PC-3 (cell line): ENCODE measurements at regions of chr19 and their contacts with region 1.

Region 1: GRCh38 chr19:56080669-56081401 is 40.3 kb downstream of the ZNF787 start:
- DNase-seq: peak; percentile 59
- ATAC-seq: peak; percentile 53
- H3K4me3 ChIP-seq: peak overlapping the region; percentile 53
- H3K27ac ChIP-seq: no peak overlapping the region
- H3K4me1 ChIP-seq: no peaks in the 10 kb centered on the region; the same call in 1 of the 2 replicates
- H3K27me3 ChIP-seq: no peaks in the 10 kb centered on the region
- CTCF ChIP-seq: peak; percentile 63

Region 2: DNA sequence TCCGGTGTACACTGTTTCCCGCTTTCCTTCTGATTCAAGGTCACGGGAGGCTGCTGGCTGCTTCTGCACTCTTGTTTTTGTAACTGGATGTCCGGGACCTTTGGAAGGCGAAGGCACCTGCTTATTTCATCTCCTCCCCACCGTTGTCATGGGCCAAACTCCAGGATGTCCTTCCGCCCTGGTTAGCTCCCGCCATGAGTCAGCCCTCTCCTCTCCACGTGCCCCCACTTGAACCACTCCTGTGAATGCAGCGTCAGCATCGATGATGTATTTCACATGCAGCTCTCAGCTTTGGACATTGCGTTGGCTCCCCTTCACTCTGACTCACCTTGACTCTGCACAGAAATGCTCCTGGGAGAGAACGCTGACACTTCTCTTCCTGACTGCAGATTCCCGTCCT is 89.4 kb after region 1 on chr19:
- CTCF ChIA-PET with region 1: interaction called, 9 read pairs
- POLR2A ChIA-PET with region 1: interaction called, 3 read pairs
- intact Hi-C with region 1: loop called (anchors 1 kb)
- DNase-seq: peak; percentile 94
- ATAC-seq: peak; percentile 87
- H3K4me3 ChIP-seq: no peak overlapping the region
- H3K27ac ChIP-seq: peak overlapping the region; percentile 36
- H3K4me1 ChIP-seq: peaks cover 9% of the 10 kb centered on the region
- H3K27me3 ChIP-seq: peaks cover 8% of the 10 kb centered on the region
- CTCF ChIP-seq: no peak

Region 3: DNA sequence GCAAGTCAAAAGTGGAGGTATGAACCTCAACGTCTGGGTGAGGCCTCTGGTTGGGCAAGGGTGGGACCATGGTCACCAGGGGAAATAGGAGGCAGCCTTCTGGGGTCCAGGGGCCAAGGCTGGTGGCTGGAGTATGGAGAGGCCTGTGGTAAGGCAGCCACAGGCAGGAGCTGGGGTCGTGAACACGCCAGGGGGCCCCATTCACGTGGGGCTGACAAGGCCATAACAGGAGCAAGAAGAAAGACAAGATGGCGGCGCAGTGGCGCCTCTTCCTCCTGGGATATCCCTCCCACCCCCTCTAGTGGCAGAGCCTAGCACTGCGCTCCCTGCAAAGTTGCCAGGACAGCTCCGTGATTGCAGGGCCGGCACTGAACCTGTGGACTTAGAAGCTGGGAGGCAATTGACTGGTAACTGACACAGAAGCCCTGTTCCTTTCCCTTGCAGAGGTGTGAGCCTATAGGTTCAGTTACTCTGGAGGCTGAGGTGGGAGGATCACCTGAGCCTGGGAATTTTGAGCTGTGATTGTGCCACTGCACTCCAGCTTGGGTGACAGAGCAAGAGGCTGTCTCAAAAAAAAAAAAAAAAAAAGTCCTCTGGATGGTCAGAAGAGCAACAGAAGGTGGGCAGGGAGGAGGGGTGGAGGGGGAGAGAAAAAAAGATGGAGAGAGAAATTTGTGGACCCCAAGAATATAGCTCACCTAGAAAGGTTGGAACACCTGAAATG is 172.0 kb after region 1 on chr19:
- CTCF ChIA-PET with region 1: interaction called, 3 read pairs
- POLR2A ChIA-PET with region 1: no interaction called
- intact Hi-C with region 1: loop called (anchors 2 kb)
- DNase-seq: peak; percentile 73
- ATAC-seq: peak; percentile 67
- H3K4me3 ChIP-seq: no peak overlapping the region
- H3K27ac ChIP-seq: no peak overlapping the region
- H3K4me1 ChIP-seq: no peaks in the 10 kb centered on the region
- H3K27me3 ChIP-seq: no peaks in the 10 kb centered on the region
- CTCF ChIP-seq: peak; percentile 90

Region 4: GRCh38 chr19:56333505-56333904 is 252.7 kb after region 1 on chr19:
- CTCF ChIA-PET with region 1: interaction called, 14 read pairs
- POLR2A ChIA-PET with region 1: no interaction called
- intact Hi-C with region 1: loop called (anchors 1 kb)
- DNase-seq: peak; percentile 87
- ATAC-seq: peak; percentile 88
- H3K4me3 ChIP-seq: no peak overlapping the region
- H3K27ac ChIP-seq: no peak overlapping the region
- H3K4me1 ChIP-seq: no peaks in the 10 kb centered on the region
- H3K27me3 ChIP-seq: peaks cover 4% of the 10 kb centered on the region; the same call in 1 of the 2 replicates
- CTCF ChIP-seq: peak; percentile 92

Region 5: DNA sequence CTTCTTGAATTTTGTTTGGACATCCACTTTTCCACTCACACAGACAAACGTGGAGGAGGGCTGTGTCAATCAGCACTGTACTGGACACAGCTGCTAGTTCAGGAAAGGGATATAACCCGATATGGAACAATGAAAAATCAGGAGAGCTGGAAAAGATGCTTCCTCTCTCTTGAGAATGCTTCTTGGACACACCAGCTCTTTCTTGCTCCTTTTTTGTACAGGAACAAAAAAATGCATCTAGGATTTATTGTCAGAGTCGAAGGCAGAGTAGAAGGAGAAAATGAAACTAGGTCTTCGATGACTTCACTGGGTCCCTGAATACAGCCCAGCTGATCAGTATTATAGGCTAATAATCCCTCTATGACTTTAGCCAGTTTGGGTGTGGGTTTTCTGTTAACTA is 697.5 kb after region 1 on chr19:
- CTCF ChIA-PET with region 1: interaction called, 10 read pairs
- POLR2A ChIA-PET with region 1: no interaction called
- intact Hi-C with region 1: no loop called
- DNase-seq: no peak
- ATAC-seq: no peak
- H3K4me3 ChIP-seq: no peak overlapping the region
- H3K27ac ChIP-seq: no peak overlapping the region
- H3K4me1 ChIP-seq: no peaks in the 10 kb centered on the region
- H3K27me3 ChIP-seq: no peaks in the 10 kb centered on the region
- CTCF ChIP-seq: no peak